ENCODE measurements at regions of chr3 and their contacts with region 1.

Region 1: DNA sequence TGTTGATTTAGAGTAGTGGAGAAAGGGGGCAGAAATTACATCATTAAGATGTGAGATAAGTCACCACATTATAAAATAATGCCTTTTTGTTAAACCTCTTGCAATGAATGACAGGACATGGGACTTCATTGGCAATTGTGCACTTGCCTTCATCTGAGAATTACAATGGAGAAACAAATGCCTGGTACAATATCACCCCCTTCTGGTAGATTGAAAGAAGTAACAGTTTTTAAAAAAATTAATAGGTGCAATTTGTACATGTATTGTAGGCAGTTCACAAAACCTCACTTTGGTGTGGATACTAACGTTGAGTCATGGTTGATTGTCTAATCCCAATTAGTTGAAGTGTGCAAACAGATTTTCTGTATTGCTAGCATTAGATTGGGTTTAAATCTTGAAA is 4.6 kb upstream of the P2RY14 start:
- DNase-seq: peak in 2 of 4 donors; percentile 56 to 63
- ATAC-seq: peak; percentile 88
- H3K4me3 ChIP-seq: no peak overlapping the region
- H3K27ac ChIP-seq: no peak overlapping the region
- H3K4me1 ChIP-seq: peaks cover 0 to 20% of the 10 kb centered on the region in 2 donors
- H3K27me3 ChIP-seq: no peaks in the 10 kb centered on the region
- CTCF ChIP-seq: peak; percentile 40 to 61

Region 2: GRCh38 chr3:151168269-151169094 is 114.4 kb before region 1 on chr3:
- intact Hi-C with region 1: loop called in 1 of 2 experiments (anchors 5 kb)
- DNase-seq: peak; percentile 42 to 91 (median 83)
- ATAC-seq: peak; percentile 94
- H3K4me3 ChIP-seq: no peak overlapping the region
- H3K27ac ChIP-seq: peak overlapping the region in 1 of 2 donors; percentile 87
- H3K4me1 ChIP-seq: peaks cover 8 to 44% of the 10 kb centered on the region in 2 donors
- H3K27me3 ChIP-seq: no peaks in the 10 kb centered on the region
- CTCF ChIP-seq: peak; percentile 60 to 79

Region 3: DNA sequence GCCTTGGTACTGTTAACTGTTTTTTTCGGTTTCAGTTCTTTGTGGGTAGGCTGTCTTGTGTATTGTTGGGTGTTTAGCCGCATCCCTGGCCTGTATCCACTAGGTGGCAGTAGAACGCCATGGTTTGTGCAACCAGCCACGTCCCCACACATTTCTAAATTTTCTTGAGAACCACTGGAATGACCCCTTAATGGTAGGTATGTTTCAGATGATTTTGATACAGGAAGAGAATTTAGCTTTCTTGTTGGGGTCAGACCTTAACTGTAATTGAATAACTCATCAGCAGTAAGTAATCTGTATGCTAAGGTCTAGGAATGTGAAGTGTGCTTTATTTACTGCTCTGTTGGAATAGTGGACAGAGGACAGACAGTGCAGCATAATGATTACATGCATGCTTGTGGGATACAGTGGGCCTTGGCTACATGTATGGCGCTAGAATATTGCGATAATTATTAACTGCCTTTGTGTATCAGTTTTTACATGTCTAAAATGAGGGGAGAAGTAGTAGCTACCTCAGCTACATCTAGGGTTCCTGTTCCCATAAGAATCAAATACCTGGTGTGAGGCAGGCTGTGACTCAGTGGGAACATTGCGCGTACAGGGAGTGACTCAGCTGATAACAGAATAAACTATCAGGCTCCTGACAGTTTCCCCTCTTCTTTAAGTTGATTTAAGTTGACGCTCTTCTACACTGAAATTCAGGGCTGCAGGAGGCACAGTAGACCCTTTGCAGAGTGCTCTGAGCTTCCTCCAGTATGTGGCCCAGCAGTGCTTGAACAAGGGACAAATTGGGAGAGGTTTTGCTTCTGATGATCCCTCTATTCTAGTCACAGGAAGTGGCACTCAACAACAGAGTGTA is 54.9 kb before region 1 on chr3:
- intact Hi-C with region 1: loop called in 1 of 2 experiments (anchors 2 kb)
- DNase-seq: peak; percentile 63 to 87 (median 79)
- ATAC-seq: peak; percentile 96
- H3K4me3 ChIP-seq: no peak overlapping the region
- H3K27ac ChIP-seq: peak overlapping the region in 1 of 2 donors; percentile 51
- H3K4me1 ChIP-seq: peaks cover 0 to 25% of the 10 kb centered on the region in 2 donors
- H3K27me3 ChIP-seq: no peaks in the 10 kb centered on the region
- CTCF ChIP-seq: peak; percentile 85 to 89